K562 (cell line): ENCODE measurements at regions of chr2 and their contacts with region 1.

Region 1: GRCh38 chr2:27095745-27096651 is 9.4 kb downstream of the KHK start:
- DNase-seq: peak; percentile 69 to 80 (median 74)
- ATAC-seq: peak; percentile 90
- H3K4me3 ChIP-seq: no peak overlapping the region
- H3K27ac ChIP-seq: peak overlapping the region; percentile 57
- H3K4me1 ChIP-seq: peaks cover 38 to 49% of the 10 kb centered on the region in 2 experiments
- H3K27me3 ChIP-seq: no peaks in the 10 kb centered on the region
- CTCF ChIP-seq: no peak
- EP300 ChIP-seq: no peak
- POLR2A ChIP-seq: no peak
- RAD21 ChIP-seq: no peak

Region 2: GRCh38 chr2:27079233-27080139 is 16.5 kb before region 1 on chr2:
- CTCF ChIA-PET with region 1: no interaction called
- POLR2A ChIA-PET with region 1: interaction called, 11 read pairs
- in situ Hi-C with region 1: no loop called
- intact Hi-C with region 1: no loop called
- DNase-seq: no peak
- ATAC-seq: no peak
- H3K4me3 ChIP-seq: no peak overlapping the region
- H3K27ac ChIP-seq: no peak overlapping the region
- H3K4me1 ChIP-seq: peaks cover 63 to 65% of the 10 kb centered on the region in 2 experiments
- H3K27me3 ChIP-seq: no peaks in the 10 kb centered on the region
- CTCF ChIP-seq: no peak
- EP300 ChIP-seq: no peak
- POLR2A ChIP-seq: no peak
- RAD21 ChIP-seq: no peak

Region 3: GRCh38 chr2:27191053-27191829 is 95.2 kb after region 1 on chr2:
- CTCF ChIA-PET with region 1: interaction called, 27 read pairs
- POLR2A ChIA-PET with region 1: no interaction called
- in situ Hi-C with region 1: loop called (anchors 5 kb)
- intact Hi-C with region 1: loop called (anchors 1 kb)
- DNase-seq: peak; percentile 54 to 79 (median 62)
- ATAC-seq: peak; percentile 98
- H3K4me3 ChIP-seq: no peak overlapping the region
- H3K27ac ChIP-seq: no peak overlapping the region
- H3K4me1 ChIP-seq: no peaks in the 10 kb centered on the region; a peak in 2 of 5 replicates
- H3K27me3 ChIP-seq: no peaks in the 10 kb centered on the region
- CTCF ChIP-seq: peak; percentile 79 to 93 (median 82)
- EP300 ChIP-seq: no peak
- POLR2A ChIP-seq: no peak
- RAD21 ChIP-seq: peak; percentile 91

Region 4: GRCh38 chr2:27211829-27212627 is 116.0 kb after region 1 on chr2 and contains the starts of genes ATRAID and SLC5A6:
- CTCF ChIA-PET with region 1: no interaction called
- POLR2A ChIA-PET with region 1: no interaction called
- in situ Hi-C with region 1: no loop called
- intact Hi-C with region 1: loop called (anchors 5 kb)
- DNase-seq: peak; percentile 91 to 96 (median 96)
- ATAC-seq: peak; percentile 95
- H3K4me3 ChIP-seq: peak within 1 kb of the TSS; percentile 76
- H3K27ac ChIP-seq: peak within 1 kb of the TSS; percentile 92
- H3K4me1 ChIP-seq: peaks cover 22 to 34% of the 10 kb centered on the region in 2 experiments
- H3K27me3 ChIP-seq: no peaks in the 10 kb centered on the region
- CTCF ChIP-seq: no peak
- EP300 ChIP-seq: no peak
- POLR2A ChIP-seq: peak; percentile 95
- RAD21 ChIP-seq: no peak
- polyA plus RNA-seq, gene ATRAID: 122 to 187 TPM
- polyA plus RNA-seq, gene SLC5A6: 32.6 to 92.7 TPM

Region 5: DNA sequence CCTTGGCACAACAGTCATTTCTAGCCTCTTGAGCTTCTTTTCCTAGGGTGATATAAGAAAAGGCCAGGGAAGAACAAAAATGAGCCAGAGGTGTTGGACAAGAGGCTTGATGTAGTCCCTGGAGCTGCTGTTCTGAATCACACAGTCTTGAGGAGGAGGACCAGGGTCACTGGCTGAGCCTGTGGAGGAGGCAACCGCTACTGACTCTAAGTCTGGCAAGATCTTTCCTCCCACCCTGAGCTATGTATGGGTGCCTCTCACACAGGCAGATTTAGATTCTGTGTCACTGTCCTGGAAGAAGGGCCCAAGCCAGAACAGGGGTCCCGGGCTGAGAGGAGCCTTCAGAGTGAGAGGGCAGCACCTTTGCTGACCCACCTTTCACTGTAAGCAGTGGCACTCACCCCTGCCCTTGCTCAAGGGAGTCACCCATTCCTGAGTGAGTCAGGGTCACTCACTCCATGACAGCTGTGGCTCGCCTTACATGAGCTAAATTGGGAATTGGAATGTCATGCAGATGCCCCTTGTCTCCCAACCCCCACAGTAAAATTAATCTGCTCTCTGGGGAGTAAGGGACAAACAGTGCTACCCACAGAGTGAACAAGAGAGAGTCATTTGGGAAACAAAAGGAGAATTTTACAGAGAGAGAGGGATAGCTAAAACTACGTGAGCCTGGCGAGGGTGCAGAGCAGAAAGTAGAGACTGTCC is 186.0 kb after region 1 on chr2 and contains the start of gene TRIM54:
- CTCF ChIA-PET with region 1: interaction called, 20 read pairs
- POLR2A ChIA-PET with region 1: no interaction called
- in situ Hi-C with region 1: loop called (anchors 5 kb)
- intact Hi-C with region 1: loop called (anchors 1 kb)
- DNase-seq: no peak
- ATAC-seq: peak; percentile 37; the same call in 1 of the 3 replicates
- H3K4me3 ChIP-seq: no peak within 1 kb of the TSS
- H3K27ac ChIP-seq: no peak within 1 kb of the TSS
- H3K4me1 ChIP-seq: peaks cover 6 to 17% of the 10 kb centered on the region in 2 experiments
- H3K27me3 ChIP-seq: peaks cover 0 to 4% of the 10 kb centered on the region in 2 experiments; a peak in 1 of 5 replicates
- CTCF ChIP-seq: no peak
- EP300 ChIP-seq: no peak
- POLR2A ChIP-seq: no peak
- RAD21 ChIP-seq: no peak
- polyA plus RNA-seq, gene TRIM54: not detected

Region 6: GRCh38 chr2:27303093-27304025 is 207.4 kb after region 1 on chr2:
- CTCF ChIA-PET with region 1: interaction called, 19 read pairs
- POLR2A ChIA-PET with region 1: no interaction called
- in situ Hi-C with region 1: no loop called
- intact Hi-C with region 1: loop called (anchors 5 kb)
- DNase-seq: peak; percentile 69 to 82 (median 75)
- ATAC-seq: peak; percentile 87
- H3K4me3 ChIP-seq: peak overlapping the region; percentile 26
- H3K27ac ChIP-seq: no peak overlapping the region
- H3K4me1 ChIP-seq: peaks cover 0 to 10% of the 10 kb centered on the region in 2 experiments; a peak in 3 of 5 replicates
- H3K27me3 ChIP-seq: no peaks in the 10 kb centered on the region
- CTCF ChIP-seq: peak; percentile 80 to 93 (median 85)
- EP300 ChIP-seq: no peak
- POLR2A ChIP-seq: no peak
- RAD21 ChIP-seq: peak; percentile 80 to 85